ENCODE measurements at regions of chr1 and their contacts with region 1.

Region 1: GRCh38 chr1:153572569-153573015 is 6.9 kb upstream of the S100A2 start:
- DNase-seq: peak; percentile 89
- H3K4me3 ChIP-seq: no peak overlapping the region
- H3K27ac ChIP-seq: peak overlapping the region; percentile 78
- H3K4me1 ChIP-seq: peaks cover 39% of the 10 kb centered on the region
- H3K27me3 ChIP-seq: no peaks in the 10 kb centered on the region
- CTCF ChIP-seq: peak; percentile 92 to 99

Region 2: GRCh38 chr1:153510984-153511410 is 61.6 kb before region 1 on chr1:
- CTCF ChIA-PET with region 1: interaction called, 4 read pairs
- dilution Hi-C with region 1: no loop called
- in situ Hi-C with region 1: no loop called
- intact Hi-C with region 1: loop called (anchors 1 kb)
- DNase-seq: peak; percentile 59
- H3K4me3 ChIP-seq: no peak overlapping the region
- H3K27ac ChIP-seq: peak overlapping the region; percentile 39
- H3K4me1 ChIP-seq: peaks cover 59% of the 10 kb centered on the region
- H3K27me3 ChIP-seq: no peaks in the 10 kb centered on the region
- CTCF ChIP-seq: peak; percentile 88 to 99

Region 3: GRCh38 chr1:153532769-153533599 is 39.6 kb before region 1 on chr1:
- CTCF ChIA-PET with region 1: interaction called, 3 read pairs
- dilution Hi-C with region 1: no loop called
- in situ Hi-C with region 1: loop called (anchors 5 kb)
- intact Hi-C with region 1: loop called (anchors 1 kb)
- DNase-seq: peak; percentile 76
- H3K4me3 ChIP-seq: peak overlapping the region in 2 of 3 experiments; percentile 18 to 73
- H3K27ac ChIP-seq: peak overlapping the region; percentile 73
- H3K4me1 ChIP-seq: peaks cover 44% of the 10 kb centered on the region
- H3K27me3 ChIP-seq: no peaks in the 10 kb centered on the region
- CTCF ChIP-seq: peak; percentile 56 to 78

Region 4: GRCh38 chr1:153608742-153609584 is 36.4 kb after region 1 on chr1:
- CTCF ChIA-PET with region 1: interaction called, 6 read pairs
- dilution Hi-C with region 1: no loop called
- in situ Hi-C with region 1: no loop called
- intact Hi-C with region 1: loop called (anchors 1 kb)
- DNase-seq: peak; percentile 98
- H3K4me3 ChIP-seq: peak overlapping the region; percentile 37 to 70 (median 53)
- H3K27ac ChIP-seq: peak overlapping the region; percentile 83
- H3K4me1 ChIP-seq: peaks cover 34% of the 10 kb centered on the region
- H3K27me3 ChIP-seq: no peaks in the 10 kb centered on the region
- CTCF ChIP-seq: no peak

Region 5: DNA sequence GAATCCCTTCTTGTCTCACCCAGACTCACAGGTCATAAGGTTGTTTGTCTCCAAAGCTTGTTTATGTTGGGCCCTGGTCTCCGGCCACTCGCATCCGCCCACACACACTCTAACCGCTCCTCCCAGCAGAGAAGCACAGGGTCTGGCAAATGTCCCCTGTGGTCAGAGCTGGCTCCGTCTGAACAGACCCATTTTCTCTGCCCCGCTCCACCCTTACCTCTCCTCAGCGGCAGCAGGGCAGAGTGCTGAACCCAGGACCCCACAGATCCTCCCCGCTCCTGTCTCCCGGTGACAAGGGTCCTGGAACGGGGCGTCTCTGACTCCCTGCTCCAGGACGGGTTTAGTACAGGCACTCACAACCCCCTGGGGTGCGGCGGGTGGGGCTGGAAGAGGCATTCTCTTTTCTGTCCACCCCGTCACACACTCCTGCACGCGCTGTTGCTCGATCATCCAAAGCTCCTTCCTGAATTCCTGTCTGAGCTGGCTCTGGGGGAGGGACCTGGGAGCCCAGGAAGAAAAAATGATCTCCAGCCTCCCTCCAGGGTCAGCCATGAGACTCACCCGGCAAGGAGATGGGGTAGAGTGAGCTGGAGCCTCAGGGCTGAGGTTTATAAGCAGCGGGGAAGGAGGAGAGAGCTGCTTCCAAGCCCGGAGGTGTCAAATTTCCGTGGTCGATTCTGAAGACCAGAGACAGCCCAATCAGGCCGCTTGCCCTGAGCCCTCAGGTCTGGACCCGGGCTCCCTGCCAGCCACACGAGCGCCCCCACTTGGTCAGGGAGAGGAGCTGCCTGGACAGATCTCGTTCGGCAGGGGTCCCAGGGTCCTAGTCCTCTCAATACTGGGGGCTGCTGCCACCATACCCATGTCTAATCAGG is 54.6 kb after region 1 on chr1 and contains the start of gene S100A13:
- CTCF ChIA-PET with region 1: interaction called, 9 read pairs
- dilution Hi-C with region 1: no loop called
- in situ Hi-C with region 1: loop called in 1 of 2 experiments (anchors 5 kb)
- intact Hi-C with region 1: loop called (anchors 1 kb)
- DNase-seq: peak; percentile 93
- H3K4me3 ChIP-seq: peak within 1 kb of the TSS; percentile 57 to 69 (median 64)
- H3K27ac ChIP-seq: peak within 1 kb of the TSS; percentile 79
- H3K4me1 ChIP-seq: peaks cover 22% of the 10 kb centered on the region
- H3K27me3 ChIP-seq: no peaks in the 10 kb centered on the region
- CTCF ChIP-seq: peak; percentile 65 to 76
- total RNA-seq, gene S100A13: 72.0 to 213 TPM

Region 6: GRCh38 chr1:153658400-153659174 is 86.0 kb after region 1 on chr1 and contains the start of gene SNAPIN:
- CTCF ChIA-PET with region 1: no interaction called
- dilution Hi-C with region 1: no loop called
- in situ Hi-C with region 1: no loop called
- intact Hi-C with region 1: loop called (anchors 1 kb)
- DNase-seq: peak; percentile 83
- H3K4me3 ChIP-seq: peak within 1 kb of the TSS; percentile 70 to 93 (median 75)
- H3K27ac ChIP-seq: peak within 1 kb of the TSS; percentile 82
- H3K4me1 ChIP-seq: peaks cover 13% of the 10 kb centered on the region
- H3K27me3 ChIP-seq: no peaks in the 10 kb centered on the region
- CTCF ChIP-seq: peak in 1 of 2 donors; percentile 29
- total RNA-seq, gene SNAPIN: 33.1 to 39.8 TPM

Region 7: GRCh38 chr1:153749408-153750005 is 176.9 kb after region 1 on chr1:
- CTCF ChIA-PET with region 1: no interaction called
- dilution Hi-C with region 1: no loop called
- in situ Hi-C with region 1: no loop called
- intact Hi-C with region 1: loop called (anchors 1 kb)
- DNase-seq: peak; percentile 62
- H3K4me3 ChIP-seq: no peak overlapping the region
- H3K27ac ChIP-seq: no peak overlapping the region
- H3K4me1 ChIP-seq: no peaks in the 10 kb centered on the region
- H3K27me3 ChIP-seq: no peaks in the 10 kb centered on the region
- CTCF ChIP-seq: peak; percentile 98 to 99

Measured in mammary epithelial cell (primary cell).